Activated CD4-positive, alpha-beta memory T cell treated with anti-CD3 and anti-CD28 coated beads, Interleukin-2, amount 10 ng/mL, durations not matched to agents 7 days and 5 days (primary cell): ENCODE measurements at regions of chr2 and their contacts with region 1.

Region 1: DNA sequence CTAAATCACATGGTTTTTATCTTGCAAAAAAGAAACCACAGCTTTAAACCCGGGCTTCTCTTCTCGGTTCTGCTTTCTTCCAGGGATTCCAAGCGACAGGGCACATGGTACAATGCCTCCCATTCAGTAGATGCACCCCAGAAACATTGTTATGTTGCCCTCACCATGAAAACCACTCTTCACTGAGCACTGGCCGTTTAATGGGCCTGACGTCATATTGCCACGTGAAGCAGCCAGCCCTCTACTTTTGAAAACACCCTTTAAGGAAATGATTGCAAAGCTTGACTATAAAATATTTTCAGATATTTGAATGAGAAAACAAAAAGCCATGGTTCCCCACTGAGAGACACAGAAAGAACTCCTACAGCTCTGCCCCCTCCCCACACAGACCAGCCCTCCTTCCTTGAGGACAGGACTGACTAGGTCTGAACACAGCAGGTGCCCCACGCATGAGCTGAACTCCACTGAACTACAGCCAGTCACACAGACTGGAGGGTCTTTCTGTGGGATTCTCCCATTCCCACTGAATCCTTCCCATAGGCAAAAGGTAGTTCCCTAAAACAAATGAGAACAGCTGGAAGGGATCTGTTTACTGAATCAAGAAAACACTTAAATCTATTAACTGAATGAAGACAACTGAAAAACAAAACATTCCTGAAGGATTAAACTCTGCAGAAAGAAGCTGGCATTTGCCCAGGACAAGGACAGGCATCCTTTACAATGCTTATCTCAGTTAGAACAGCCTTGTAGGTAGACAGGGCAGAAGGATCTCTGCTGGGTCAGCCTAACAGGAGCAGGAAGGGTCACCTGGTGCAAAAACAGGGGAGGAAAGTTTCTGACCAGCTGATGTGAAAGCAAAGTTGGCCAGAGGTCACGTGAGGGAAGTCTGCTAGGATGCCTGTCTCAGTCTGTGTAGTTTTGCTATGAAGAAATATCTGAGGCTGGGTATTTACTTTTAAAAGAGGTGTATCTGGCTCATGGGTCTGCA is 348.9 kb downstream of the ANAPC1 start:
- DNase-seq: peak; percentile 48
- H3K4me3 Mint-ChIP-seq: peak overlapping the region; percentile 65
- H3K27ac Mint-ChIP-seq: peak overlapping the region; percentile 100
- H3K4me1 Mint-ChIP-seq: peaks cover 46% of the 10 kb centered on the region
- H3K27me3 Mint-ChIP-seq: peaks cover 1% of the 10 kb centered on the region

Region 2: GRCh38 chr2:111624401-111625156 is 89.5 kb after region 1 on chr2:
- CTCF ChIA-PET with region 1: no interaction called
- POLR2A ChIA-PET with region 1: interaction called, 10 read pairs
- DNase-seq: no peak
- H3K4me3 Mint-ChIP-seq: no peak overlapping the region
- H3K27ac Mint-ChIP-seq: peak overlapping the region; percentile 63
- H3K4me1 Mint-ChIP-seq: peaks cover 37% of the 10 kb centered on the region
- H3K27me3 Mint-ChIP-seq: peaks cover 50% of the 10 kb centered on the region

Region 3: DNA sequence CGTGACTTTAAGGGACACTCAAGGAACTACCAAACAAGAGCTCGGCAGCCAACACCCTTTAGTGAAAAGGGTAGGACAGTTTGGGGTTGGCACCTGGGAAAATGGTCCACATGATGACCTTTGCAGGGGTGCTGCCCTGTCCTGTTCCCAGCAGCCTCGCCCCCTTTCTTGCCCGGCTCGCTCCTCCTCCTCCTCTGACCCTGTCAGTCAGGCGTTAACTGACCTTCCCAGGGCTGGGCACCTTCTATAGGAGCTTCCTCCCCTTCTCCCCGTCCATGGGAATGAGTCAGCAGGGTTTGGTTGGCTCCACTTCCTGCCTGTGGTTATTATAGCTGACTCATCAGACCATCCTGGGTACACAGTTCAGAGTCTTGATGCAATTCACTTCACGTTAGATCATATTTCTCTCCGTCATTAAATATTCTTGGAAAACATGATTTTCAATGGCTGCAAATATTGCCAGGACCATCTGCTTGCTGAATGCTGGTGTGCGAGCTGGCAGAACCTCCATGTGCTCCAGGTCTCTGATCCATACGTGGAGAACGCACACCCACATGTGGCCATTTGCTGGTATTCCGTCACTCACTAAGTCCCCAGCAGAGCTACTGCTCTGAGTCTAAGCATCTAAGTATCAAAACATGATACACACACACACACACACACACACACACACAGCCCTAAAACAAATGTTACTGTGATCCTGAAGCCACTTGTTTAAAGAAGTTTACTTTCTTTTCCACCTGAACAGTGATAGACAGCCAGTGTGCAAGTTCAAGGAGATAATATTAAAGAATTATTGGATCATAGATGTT is 163.8 kb after region 1 on chr2:
- CTCF ChIA-PET with region 1: interaction called, 7 read pairs
- POLR2A ChIA-PET with region 1: interaction called, 17 read pairs
- DNase-seq: peak; percentile 83
- H3K4me3 Mint-ChIP-seq: peak overlapping the region; percentile 66
- H3K27ac Mint-ChIP-seq: peak overlapping the region; percentile 83
- H3K4me1 Mint-ChIP-seq: peaks cover 50% of the 10 kb centered on the region
- H3K27me3 Mint-ChIP-seq: peaks cover 13% of the 10 kb centered on the region